H1 (cell line): ENCODE measurements at regions of chr12 and their contacts with region 1.

Region 1: DNA sequence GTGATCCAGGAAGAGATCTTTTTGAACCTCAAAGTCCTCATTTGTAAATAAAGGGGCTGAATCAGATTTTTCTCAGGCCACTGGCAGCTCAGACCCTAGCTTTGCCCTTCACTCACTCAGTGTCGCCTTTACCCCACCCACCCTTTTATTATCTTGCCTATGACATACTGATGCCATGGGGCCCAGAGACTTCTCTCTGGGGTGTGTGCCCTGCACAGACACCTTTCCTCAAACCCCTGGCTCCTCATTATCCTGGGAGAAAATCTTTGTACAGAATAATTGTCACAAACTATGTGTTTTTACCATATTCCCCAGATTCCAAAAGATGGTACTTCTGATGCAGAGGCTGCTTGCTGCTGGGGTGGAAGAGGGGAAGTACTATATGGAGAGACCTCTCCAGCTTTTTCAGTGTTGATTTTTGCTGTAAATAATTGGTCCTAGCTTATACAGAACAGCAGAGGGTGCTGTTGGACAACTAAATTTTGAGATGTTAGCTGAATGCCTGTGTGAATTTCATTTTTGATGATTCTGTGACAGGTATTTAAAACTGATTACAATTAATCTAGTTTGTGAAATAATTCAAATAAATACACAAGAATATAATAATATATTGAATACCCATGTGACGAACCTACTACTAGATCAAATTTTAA is 53.9 kb upstream of the DCD start:
- DNase-seq: no peak
- H3K4me3 ChIP-seq: no peak overlapping the region
- H3K27ac ChIP-seq: no peak overlapping the region
- H3K4me1 ChIP-seq: no peaks in the 10 kb centered on the region
- H3K27me3 ChIP-seq: no peaks in the 10 kb centered on the region
- CTCF ChIP-seq: peak in 2 of 3 experiments; percentile 43 to 55; a peak in 2 of 4 replicates
- EP300 ChIP-seq: no peak
- POLR2A ChIP-seq: no peak
- RAD21 ChIP-seq: peak; percentile 79

Region 2: DNA sequence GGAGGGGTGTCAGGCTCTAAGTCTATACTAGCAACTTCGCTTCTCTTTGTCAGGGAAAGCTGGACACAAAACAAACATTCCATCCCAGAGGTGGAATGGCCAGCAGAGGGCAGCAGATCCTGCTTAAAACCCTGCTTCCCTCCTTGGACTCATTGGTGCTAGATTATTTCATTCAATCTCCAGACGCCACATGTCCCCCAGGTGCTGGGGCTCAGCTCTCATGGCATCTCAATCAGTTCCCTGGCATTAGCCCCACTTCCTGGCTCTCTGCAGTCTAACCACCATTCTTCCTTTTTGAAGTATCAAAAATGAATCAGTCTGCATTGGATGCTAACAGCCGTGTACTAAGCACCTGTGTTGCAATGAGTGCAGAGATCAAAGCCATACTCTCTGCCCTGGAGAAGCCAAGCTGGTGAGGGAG is 105.5 kb before region 1 on chr12:
- CTCF ChIA-PET with region 1: interaction called, 10 read pairs
- POLR2A ChIA-PET with region 1: no interaction called
- DNase-seq: peak; percentile 50 to 88
- H3K4me3 ChIP-seq: no peak overlapping the region
- H3K27ac ChIP-seq: no peak overlapping the region
- H3K4me1 ChIP-seq: 0 out of 7 replicates have a peak, but pooled peaks cover 0 to 2% (median 0%) of the 10 kb centered on the region in 4 experiments
- H3K27me3 ChIP-seq: peaks cover 0 to 19% (median 13%) of the 10 kb centered on the region in 4 experiments; a peak in 3 of 7 replicates
- CTCF ChIP-seq: peak; percentile 75 to 97 (median 84)
- EP300 ChIP-seq: no peak
- POLR2A ChIP-seq: no peak
- RAD21 ChIP-seq: peak; percentile 72 to 77

Region 3: DNA sequence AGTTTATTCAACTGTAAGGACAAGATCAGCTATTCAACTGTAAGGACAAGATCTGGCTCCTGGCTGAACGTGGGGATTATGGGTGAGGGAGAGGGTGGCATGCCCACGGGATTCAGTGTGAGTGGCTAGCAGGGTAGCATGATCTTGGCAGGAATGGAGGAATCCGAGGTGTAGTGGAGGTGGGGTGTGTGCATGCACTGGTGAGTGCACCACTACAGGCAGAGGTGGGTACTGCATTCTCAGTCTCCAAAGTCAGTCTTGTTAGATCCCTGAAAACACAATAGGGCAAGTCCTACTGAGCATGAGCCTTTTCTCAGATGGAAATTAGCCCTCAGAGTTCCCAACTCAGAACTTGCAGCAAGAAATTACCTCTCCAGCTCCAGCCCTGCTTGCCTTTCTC is 21.7 kb before region 1 on chr12:
- CTCF ChIA-PET with region 1: interaction called, 18 read pairs
- POLR2A ChIA-PET with region 1: no interaction called
- DNase-seq: peak; percentile 25 to 90
- H3K4me3 ChIP-seq: no peak overlapping the region
- H3K27ac ChIP-seq: no peak overlapping the region
- H3K4me1 ChIP-seq: peaks cover 12 to 23% (median 20%) of the 10 kb centered on the region in 4 experiments
- H3K27me3 ChIP-seq: no peaks in the 10 kb centered on the region; a peak in 1 of 7 replicates
- CTCF ChIP-seq: peak; percentile 46 to 92 (median 83)
- EP300 ChIP-seq: no peak
- POLR2A ChIP-seq: no peak
- RAD21 ChIP-seq: peak; percentile 21 to 37; a peak in 3 of 4 replicates

Region 4: GRCh38 chr12:54716261-54716660 is 14.2 kb after region 1 on chr12:
- CTCF ChIA-PET with region 1: interaction called, 18 read pairs
- POLR2A ChIA-PET with region 1: no interaction called
- DNase-seq: no peak
- H3K4me3 ChIP-seq: no peak overlapping the region
- H3K27ac ChIP-seq: no peak overlapping the region
- H3K4me1 ChIP-seq: peaks cover 0 to 9% (median 2%) of the 10 kb centered on the region in 4 experiments; a peak in 2 of 7 replicates
- H3K27me3 ChIP-seq: no peaks in the 10 kb centered on the region
- CTCF ChIP-seq: no peak
- EP300 ChIP-seq: no peak
- POLR2A ChIP-seq: no peak
- RAD21 ChIP-seq: no peak

Region 5: DNA sequence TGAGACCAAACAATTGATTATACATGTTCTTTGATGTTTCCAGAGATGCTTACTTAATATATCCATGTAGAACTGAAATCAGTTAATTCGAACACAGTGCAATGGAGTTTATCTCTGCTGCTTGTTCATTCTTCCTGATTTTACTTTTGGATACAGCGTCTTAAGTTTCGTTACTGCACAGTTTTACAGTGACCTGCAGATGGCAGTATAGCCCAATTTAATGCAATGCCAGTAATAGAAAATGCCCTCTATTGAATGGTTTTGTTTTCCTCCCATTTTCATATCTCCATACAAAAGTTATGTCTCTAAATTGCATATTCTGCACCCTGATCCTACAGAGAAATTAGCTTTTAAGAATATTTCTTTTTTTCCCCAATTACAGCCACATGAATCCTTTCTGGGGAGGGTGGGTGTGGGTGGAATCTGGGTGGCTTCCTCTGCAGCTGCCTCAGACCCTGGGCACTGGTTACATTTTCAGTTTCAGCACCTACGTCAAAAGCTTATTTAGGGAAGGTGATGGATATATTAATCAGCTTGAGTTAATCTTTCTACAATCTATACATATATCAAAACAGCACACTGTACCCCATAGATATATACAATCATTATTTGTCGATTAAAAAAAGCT is 47.2 kb after region 1 on chr12:
- CTCF ChIA-PET with region 1: interaction called, 31 read pairs
- POLR2A ChIA-PET with region 1: no interaction called
- DNase-seq: no peak
- H3K4me3 ChIP-seq: no peak overlapping the region
- H3K27ac ChIP-seq: no peak overlapping the region
- H3K4me1 ChIP-seq: no peaks in the 10 kb centered on the region
- H3K27me3 ChIP-seq: no peaks in the 10 kb centered on the region
- CTCF ChIP-seq: peak in 2 of 3 experiments; percentile 52 to 71; a peak in 2 of 4 replicates
- EP300 ChIP-seq: no peak
- POLR2A ChIP-seq: no peak
- RAD21 ChIP-seq: peak; percentile 79 to 81

Region 6: DNA sequence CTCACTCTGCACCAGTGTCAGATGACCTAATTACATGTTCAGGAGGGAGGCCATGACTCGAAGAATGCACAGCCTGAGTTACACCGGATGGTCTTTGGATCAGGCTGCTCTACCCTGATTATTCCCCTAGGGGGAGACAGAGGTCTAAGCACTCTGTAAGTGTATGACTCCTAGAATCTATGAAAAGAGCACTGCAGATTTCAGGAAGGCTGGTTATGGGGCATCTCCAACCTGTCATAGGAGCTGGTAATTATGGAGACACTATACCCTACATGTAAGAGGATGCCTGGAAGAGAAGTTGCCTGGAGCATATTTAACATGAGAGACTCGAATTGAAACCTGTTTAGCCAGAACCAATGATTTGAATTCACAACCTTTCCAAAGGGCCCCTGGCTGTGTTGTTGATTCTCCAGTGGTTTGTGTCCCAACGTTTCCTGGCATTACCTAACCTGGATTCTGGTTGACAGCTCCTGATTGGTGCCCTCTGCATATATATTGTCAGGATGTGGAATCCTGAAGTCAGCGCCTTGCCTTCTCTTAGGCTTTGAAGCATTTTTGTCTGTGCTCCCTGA is 152.0 kb after region 1 on chr12 and contains the start of gene MUCL1:
- CTCF ChIA-PET with region 1: interaction called, 13 read pairs
- POLR2A ChIA-PET with region 1: no interaction called
- DNase-seq: peak; percentile 49 to 86
- H3K4me3 ChIP-seq: no peak within 1 kb of the TSS
- H3K27ac ChIP-seq: no peak within 1 kb of the TSS
- H3K4me1 ChIP-seq: peaks cover 0 to 7% (median 0%) of the 10 kb centered on the region in 4 experiments; a peak in 1 of 7 replicates
- H3K27me3 ChIP-seq: peaks cover 0 to 5% (median 1%) of the 10 kb centered on the region in 4 experiments; a peak in 4 of 7 replicates
- CTCF ChIP-seq: peak; percentile 35 to 87 (median 79)
- EP300 ChIP-seq: no peak
- POLR2A ChIP-seq: no peak
- RAD21 ChIP-seq: peak; percentile 89 to 94
- total RNA-seq, gene MUCL1: not detected in 2 replicates